ENCODE measurements at regions of chr4 and their contacts with region 1.

Region 1: GRCh38 chr4:83771113-83771705 is 235.3 kb downstream of the GPAT3 start:
- DNase-seq: peak; percentile 54 to 60
- H3K4me3 ChIP-seq: no peak overlapping the region
- H3K4me3 Mint-ChIP-seq: no peak overlapping the region
- H3K27ac Mint-ChIP-seq: no peak overlapping the region
- H3K4me1 ChIP-seq: no peaks in the 10 kb centered on the region
- H3K4me1 Mint-ChIP-seq: no peaks in the 10 kb centered on the region
- H3K27me3 ChIP-seq: no peaks in the 10 kb centered on the region; the same call in 1 of the 2 replicates
- H3K27me3 Mint-ChIP-seq: peaks cover 6% of the 10 kb centered on the region
- CTCF ChIP-seq: peak; percentile 41 to 80

Region 2: GRCh38 chr4:83810428-83810827 is 39.2 kb after region 1 on chr4:
- CTCF ChIA-PET with region 1: no interaction called
- POLR2A ChIA-PET with region 1: no interaction called
- intact Hi-C with region 1: no loop called
- DNase-seq: no peak
- H3K4me3 ChIP-seq: no peak overlapping the region
- H3K4me3 Mint-ChIP-seq: no peak overlapping the region
- H3K27ac Mint-ChIP-seq: no peak overlapping the region
- H3K4me1 ChIP-seq: no peaks in the 10 kb centered on the region
- H3K4me1 Mint-ChIP-seq: no peaks in the 10 kb centered on the region
- H3K27me3 ChIP-seq: no peaks in the 10 kb centered on the region
- H3K27me3 Mint-ChIP-seq: peaks cover 7% of the 10 kb centered on the region
- CTCF ChIP-seq: no peak

Region 3: GRCh38 chr4:83846193-83846830 is 75.1 kb after region 1 on chr4:
- CTCF ChIA-PET with region 1: no interaction called
- POLR2A ChIA-PET with region 1: no interaction called
- intact Hi-C with region 1: loop called (anchors 1 kb)
- DNase-seq: peak in 1 of 2 experiments; percentile 13
- H3K4me3 ChIP-seq: no peak overlapping the region
- H3K4me3 Mint-ChIP-seq: no peak overlapping the region
- H3K27ac Mint-ChIP-seq: no peak overlapping the region
- H3K4me1 ChIP-seq: peaks cover 12% of the 10 kb centered on the region
- H3K4me1 Mint-ChIP-seq: peaks cover 7% of the 10 kb centered on the region
- H3K27me3 ChIP-seq: no peaks in the 10 kb centered on the region
- H3K27me3 Mint-ChIP-seq: no peaks in the 10 kb centered on the region
- CTCF ChIP-seq: no peak

Region 4: GRCh38 chr4:83905952-83906351 is 134.7 kb after region 1 on chr4:
- CTCF ChIA-PET with region 1: no interaction called
- POLR2A ChIA-PET with region 1: no interaction called
- intact Hi-C with region 1: loop called (anchors 5 kb)
- DNase-seq: peak; percentile 31 to 38
- H3K4me3 ChIP-seq: no peak overlapping the region
- H3K4me3 Mint-ChIP-seq: no peak overlapping the region
- H3K27ac Mint-ChIP-seq: no peak overlapping the region
- H3K4me1 ChIP-seq: no peaks in the 10 kb centered on the region
- H3K4me1 Mint-ChIP-seq: no peaks in the 10 kb centered on the region
- H3K27me3 ChIP-seq: no peaks in the 10 kb centered on the region
- H3K27me3 Mint-ChIP-seq: peaks cover 4% of the 10 kb centered on the region
- CTCF ChIP-seq: peak; percentile 48 to 62

Region 5: DNA sequence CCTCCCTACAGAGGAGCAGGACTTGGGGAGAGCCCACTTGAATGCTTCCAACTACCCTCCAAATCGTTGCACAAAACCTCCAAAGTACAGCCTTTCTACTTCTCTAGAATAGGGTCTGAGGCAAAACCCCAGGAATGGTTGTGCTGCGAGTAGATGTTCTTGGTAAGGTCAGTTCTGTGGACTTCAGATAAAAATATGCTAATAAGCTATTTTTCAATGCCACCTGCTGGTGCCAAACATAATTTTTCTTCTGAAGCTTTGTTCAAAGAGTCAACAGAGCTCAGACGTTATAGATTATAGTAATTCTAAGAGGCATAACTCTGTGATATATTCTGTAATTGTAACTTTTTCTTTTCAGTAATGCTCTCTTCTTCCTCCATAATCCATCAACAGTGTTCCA is 190.4 kb after region 1 on chr4:
- CTCF ChIA-PET with region 1: interaction called, 10 read pairs
- POLR2A ChIA-PET with region 1: no interaction called
- intact Hi-C with region 1: loop called (anchors 1 kb)
- DNase-seq: peak in 1 of 2 experiments; percentile 3
- H3K4me3 ChIP-seq: no peak overlapping the region
- H3K4me3 Mint-ChIP-seq: no peak overlapping the region
- H3K27ac Mint-ChIP-seq: no peak overlapping the region
- H3K4me1 ChIP-seq: no peaks in the 10 kb centered on the region
- H3K4me1 Mint-ChIP-seq: no peaks in the 10 kb centered on the region
- H3K27me3 ChIP-seq: no peaks in the 10 kb centered on the region
- H3K27me3 Mint-ChIP-seq: no peaks in the 10 kb centered on the region
- CTCF ChIP-seq: peak in 1 of 2 experiments; percentile 11

Region 6: DNA sequence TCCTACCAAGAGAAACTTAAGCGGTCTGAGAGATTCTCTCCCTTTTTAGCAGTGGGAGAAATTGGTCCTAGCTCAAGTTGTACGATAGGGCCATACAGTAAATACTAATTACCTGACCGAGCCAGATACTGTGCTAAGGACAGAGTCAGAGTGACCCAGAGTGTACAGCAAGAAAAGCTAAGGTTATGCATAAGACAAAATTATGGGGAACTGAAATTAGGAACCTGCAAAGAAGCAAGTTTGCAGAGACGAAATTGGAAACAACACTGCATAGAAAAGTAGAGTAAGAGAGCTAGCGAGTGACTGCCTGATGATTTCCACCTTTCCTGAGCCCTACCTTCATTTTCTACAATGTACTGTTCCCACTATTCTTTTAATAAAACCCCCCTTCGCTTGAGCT is 449.8 kb after region 1 on chr4:
- CTCF ChIA-PET with region 1: no interaction called
- POLR2A ChIA-PET with region 1: no interaction called
- intact Hi-C with region 1: no loop called
- DNase-seq: no peak
- H3K4me3 ChIP-seq: no peak overlapping the region
- H3K4me3 Mint-ChIP-seq: no peak overlapping the region
- H3K27ac Mint-ChIP-seq: no peak overlapping the region
- H3K4me1 ChIP-seq: no peaks in the 10 kb centered on the region
- H3K4me1 Mint-ChIP-seq: no peaks in the 10 kb centered on the region
- H3K27me3 ChIP-seq: no peaks in the 10 kb centered on the region
- H3K27me3 Mint-ChIP-seq: no peaks in the 10 kb centered on the region
- CTCF ChIP-seq: no peak

Region 7: GRCh38 chr4:84258905-84259830 is 488.0 kb after region 1 on chr4:
- CTCF ChIA-PET with region 1: no interaction called
- POLR2A ChIA-PET with region 1: no interaction called
- intact Hi-C with region 1: loop called (anchors 2 kb)
- DNase-seq: peak in 1 of 2 experiments; percentile 15
- H3K4me3 ChIP-seq: no peak overlapping the region
- H3K4me3 Mint-ChIP-seq: no peak overlapping the region
- H3K27ac Mint-ChIP-seq: no peak overlapping the region
- H3K4me1 ChIP-seq: 0 out of 2 replicates have a peak, but pooled peaks cover 4% of the 10 kb centered on the region
- H3K4me1 Mint-ChIP-seq: no peaks in the 10 kb centered on the region
- H3K27me3 ChIP-seq: no peaks in the 10 kb centered on the region
- H3K27me3 Mint-ChIP-seq: no peaks in the 10 kb centered on the region
- CTCF ChIP-seq: peak; percentile 31 to 53

Region 8: GRCh38 chr4:84503495-84504437 is 732.6 kb after region 1 on chr4:
- CTCF ChIA-PET with region 1: no interaction called
- POLR2A ChIA-PET with region 1: no interaction called
- intact Hi-C with region 1: loop called (anchors 1 kb)
- DNase-seq: peak in 1 of 2 experiments; percentile 64
- H3K4me3 ChIP-seq: no peak overlapping the region
- H3K4me3 Mint-ChIP-seq: no peak overlapping the region
- H3K27ac Mint-ChIP-seq: no peak overlapping the region
- H3K4me1 ChIP-seq: no peaks in the 10 kb centered on the region
- H3K4me1 Mint-ChIP-seq: peaks cover 6% of the 10 kb centered on the region
- H3K27me3 ChIP-seq: no peaks in the 10 kb centered on the region
- H3K27me3 Mint-ChIP-seq: peaks cover 17% of the 10 kb centered on the region
- CTCF ChIP-seq: peak; percentile 68 to 70

Measured in Caco-2 (cell line).